Activated CD4-positive, alpha-beta T cell treated with anti-CD3 and anti-CD28 coated beads, Interleukin-2, amount 10 ng/mL, durations not matched to agents 24 days and 14 days (primary cell): ENCODE measurements at regions of chr6 and their contacts with region 1.

Region 1: DNA sequence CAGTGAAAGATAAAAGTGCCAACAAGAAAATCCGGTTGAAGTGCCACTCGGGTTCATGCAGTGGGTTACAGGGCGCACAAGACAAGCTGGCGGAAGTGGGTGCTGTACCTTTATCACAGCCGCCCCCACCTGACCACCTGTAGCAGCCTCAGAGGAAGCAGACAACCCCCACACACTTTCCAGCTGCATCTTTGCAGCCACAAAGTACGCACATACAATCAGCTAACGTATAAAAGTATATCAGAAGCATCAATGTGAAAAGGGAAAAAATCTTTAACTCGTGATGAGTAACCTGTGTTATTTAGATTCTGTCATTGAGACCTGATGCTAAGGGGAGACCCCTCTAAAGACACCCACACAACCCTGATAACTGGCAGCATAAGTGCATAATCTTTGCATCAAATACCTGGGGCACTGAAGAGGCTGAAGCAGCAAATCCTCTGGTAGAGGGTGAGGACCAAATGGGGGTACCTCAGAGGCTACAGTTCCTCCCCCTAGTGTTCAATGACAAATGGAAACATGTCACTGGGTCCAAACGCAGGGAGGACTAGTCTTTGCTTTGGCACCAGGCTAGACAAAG is 22.1 kb downstream of the BACH2 start:
- DNase-seq: peak; percentile 94
- H3K4me3 Mint-ChIP-seq: peak overlapping the region; percentile 76
- H3K27ac Mint-ChIP-seq: peak overlapping the region; percentile 96
- H3K4me1 Mint-ChIP-seq: peaks cover 79% of the 10 kb centered on the region
- H3K27me3 Mint-ChIP-seq: no peaks in the 10 kb centered on the region

Region 2: GRCh38 chr6:89494131-89494796 is 780.3 kb before region 1 on chr6:
- intact Hi-C with region 1: no loop called
- DNase-seq: no peak
- H3K4me3 Mint-ChIP-seq: no peak overlapping the region
- H3K27ac Mint-ChIP-seq: no peak overlapping the region
- H3K4me1 Mint-ChIP-seq: no peaks in the 10 kb centered on the region
- H3K27me3 Mint-ChIP-seq: peaks cover 29% of the 10 kb centered on the region

Region 3: DNA sequence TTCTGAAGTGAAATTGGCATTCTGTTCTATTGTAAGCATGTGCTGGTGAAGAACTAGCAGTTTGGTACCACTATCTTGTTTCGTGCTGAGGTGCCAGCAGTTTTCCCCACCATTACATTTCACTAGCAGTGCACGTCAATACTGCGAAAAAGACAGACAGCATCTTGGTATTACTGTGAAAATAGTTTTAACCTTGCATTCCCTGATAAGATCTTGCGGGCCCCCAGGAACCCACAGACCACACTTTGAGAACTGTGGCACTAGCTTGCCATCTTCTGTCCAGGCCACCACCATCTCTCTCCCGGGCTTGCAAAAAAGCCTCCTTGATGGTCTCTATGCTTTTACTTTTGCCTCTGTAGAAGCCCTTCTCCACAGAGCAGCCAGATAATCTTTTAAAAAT is 163.6 kb before region 1 on chr6:
- intact Hi-C with region 1: loop called (anchors 2 kb)
- DNase-seq: peak; percentile 90
- H3K4me3 Mint-ChIP-seq: peak overlapping the region; percentile 36
- H3K27ac Mint-ChIP-seq: peak overlapping the region; percentile 63
- H3K4me1 Mint-ChIP-seq: peaks cover 58% of the 10 kb centered on the region
- H3K27me3 Mint-ChIP-seq: no peaks in the 10 kb centered on the region

Region 4: DNA sequence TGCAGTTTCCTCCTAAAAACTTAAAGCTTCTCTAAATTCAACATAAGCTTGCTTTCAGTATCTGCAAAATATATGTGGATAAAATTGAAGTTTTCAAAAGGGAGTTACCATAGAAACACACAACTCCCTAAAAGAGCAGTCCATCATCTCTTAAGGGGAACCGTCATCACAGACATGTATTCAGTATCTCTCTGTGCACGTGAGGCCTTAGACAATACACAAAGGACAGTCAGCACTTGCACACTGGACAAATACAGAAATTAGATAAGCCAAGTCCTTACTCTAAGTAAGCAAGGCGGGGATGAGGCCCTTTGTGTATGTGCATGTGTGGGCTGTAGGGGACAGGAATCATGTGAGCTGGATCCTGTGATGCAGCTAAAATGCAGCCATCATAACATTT is 114.5 kb before region 1 on chr6:
- intact Hi-C with region 1: no loop called
- DNase-seq: peak; percentile 55
- H3K4me3 Mint-ChIP-seq: no peak overlapping the region
- H3K27ac Mint-ChIP-seq: no peak overlapping the region
- H3K4me1 Mint-ChIP-seq: peaks cover 49% of the 10 kb centered on the region
- H3K27me3 Mint-ChIP-seq: no peaks in the 10 kb centered on the region

Region 5: GRCh38 chr6:90216072-90216977 is 58.2 kb before region 1 on chr6:
- intact Hi-C with region 1: loop called (anchors 1 kb)
- DNase-seq: peak; percentile 79
- H3K4me3 Mint-ChIP-seq: peak overlapping the region; percentile 48
- H3K27ac Mint-ChIP-seq: no peak overlapping the region
- H3K4me1 Mint-ChIP-seq: peaks cover 40% of the 10 kb centered on the region
- H3K27me3 Mint-ChIP-seq: no peaks in the 10 kb centered on the region

Region 6: DNA sequence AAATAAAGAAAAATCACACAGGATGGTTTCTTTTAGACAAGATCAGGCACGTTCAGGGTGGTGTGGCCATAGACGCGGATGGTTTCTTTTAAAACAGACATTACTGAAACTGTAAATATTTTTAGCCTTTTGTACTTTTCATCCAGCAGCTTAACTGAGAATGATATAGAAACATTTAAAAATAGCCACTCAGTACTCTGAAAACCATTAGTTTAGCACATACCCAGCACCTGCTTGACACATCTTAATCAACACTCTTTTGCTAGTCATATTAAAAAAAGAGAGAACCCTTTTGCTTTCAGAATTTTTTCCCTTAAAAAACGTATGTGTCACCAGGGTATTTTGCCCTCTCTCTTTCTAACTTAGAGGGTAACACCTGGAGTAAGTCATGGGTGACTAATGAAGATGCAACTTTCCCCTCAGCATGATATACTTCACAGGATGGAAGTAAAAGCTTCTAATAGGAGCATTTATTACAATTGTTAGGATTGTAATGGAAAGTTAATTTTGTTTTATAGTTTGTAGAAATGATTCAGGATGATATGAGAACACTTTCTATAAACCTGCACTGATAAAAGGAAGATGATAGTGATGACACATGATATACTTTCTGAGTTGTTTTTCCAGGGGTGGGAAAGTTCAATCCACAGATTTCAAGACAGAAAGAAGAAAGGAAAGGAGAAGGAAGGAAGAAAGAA is 23.1 kb before region 1 on chr6:
- intact Hi-C with region 1: loop called (anchors 1 kb)
- DNase-seq: peak; percentile 30
- H3K4me3 Mint-ChIP-seq: peak overlapping the region; percentile 49
- H3K27ac Mint-ChIP-seq: peak overlapping the region; percentile 95
- H3K4me1 Mint-ChIP-seq: peaks cover 68% of the 10 kb centered on the region
- H3K27me3 Mint-ChIP-seq: no peaks in the 10 kb centered on the region